CD8-positive, alpha-beta T cell (primary cell): ENCODE measurements at regions of chr2 and their contacts with region 1.

Region 1: DNA sequence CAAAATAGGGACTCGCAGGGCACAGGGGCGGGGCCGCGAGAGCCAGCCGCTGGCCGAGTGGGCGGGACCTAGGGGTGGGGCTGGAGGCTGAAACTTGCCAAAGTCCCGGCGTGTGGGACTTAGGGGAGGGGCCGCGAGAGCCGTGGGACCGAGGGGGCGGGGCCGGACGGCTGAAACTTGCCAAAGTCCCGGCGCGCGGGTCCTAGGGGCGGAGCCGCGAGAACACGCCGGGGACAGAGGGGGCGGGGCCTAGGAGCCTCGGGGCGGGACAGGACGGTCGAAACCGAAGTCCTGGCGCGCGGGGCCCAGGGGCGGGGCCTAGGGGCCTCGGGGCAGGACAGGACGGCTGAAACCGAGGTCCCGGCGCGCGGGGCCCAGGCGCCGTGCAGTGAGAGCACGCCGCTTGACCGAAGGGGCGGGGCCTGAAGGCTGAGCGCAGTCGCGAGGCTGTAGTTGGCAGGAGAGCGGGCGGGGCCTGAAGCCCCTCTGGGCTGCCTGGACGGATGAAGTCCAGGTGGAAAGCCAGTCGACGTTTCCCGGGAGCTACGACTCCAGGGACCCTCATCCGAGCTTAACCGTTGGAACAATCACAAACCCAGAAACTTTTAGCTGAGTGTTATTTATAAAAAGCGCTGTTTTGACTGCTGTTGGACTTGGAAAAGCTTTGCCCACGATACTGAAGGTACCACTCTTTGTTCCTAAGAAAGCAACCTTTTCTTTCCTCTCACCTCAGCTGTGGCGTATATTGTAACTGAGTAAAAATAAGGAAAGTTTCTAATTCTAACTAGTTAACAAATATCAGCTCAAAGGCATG is 475 bp upstream of the BARD1 start:
- DNase-seq: peak; percentile 90 to 98 (median 97)
- ATAC-seq: peak; percentile 79
- H3K4me3 ChIP-seq: peak overlapping the region; percentile 88 to 98
- H3K4me3 Mint-ChIP-seq: peak overlapping the region; percentile 99
- H3K27ac ChIP-seq: peak overlapping the region; percentile 50 to 78
- H3K27ac Mint-ChIP-seq: peak overlapping the region; percentile 72
- H3K4me1 ChIP-seq: peaks cover 17% of the 10 kb centered on the region
- H3K4me1 Mint-ChIP-seq: peaks cover 33% of the 10 kb centered on the region
- H3K27me3 ChIP-seq: no peaks in the 10 kb centered on the region
- H3K27me3 Mint-ChIP-seq: no peaks in the 10 kb centered on the region
- CTCF ChIP-seq: no peak

Region 2: GRCh38 chr2:213971536-213971935 is 838.4 kb before region 1 on chr2:
- CTCF ChIA-PET with region 1: no interaction called
- POLR2A ChIA-PET with region 1: no interaction called
- intact Hi-C with region 1: no loop called
- DNase-seq: no peak
- ATAC-seq: no peak
- H3K4me3 ChIP-seq: no peak overlapping the region
- H3K4me3 Mint-ChIP-seq: no peak overlapping the region
- H3K27ac ChIP-seq: no peak overlapping the region
- H3K27ac Mint-ChIP-seq: no peak overlapping the region
- H3K4me1 ChIP-seq: no peaks in the 10 kb centered on the region
- H3K4me1 Mint-ChIP-seq: no peaks in the 10 kb centered on the region
- H3K27me3 ChIP-seq: no peaks in the 10 kb centered on the region
- H3K27me3 Mint-ChIP-seq: peaks cover 2% of the 10 kb centered on the region
- CTCF ChIP-seq: no peak

Region 3: GRCh38 chr2:214679736-214680135 is 130.2 kb before region 1 on chr2:
- CTCF ChIA-PET with region 1: no interaction called
- POLR2A ChIA-PET with region 1: interaction called, 5 read pairs
- intact Hi-C with region 1: loop called in 1 of 2 experiments (anchors 5 kb)
- DNase-seq: no peak
- ATAC-seq: no peak
- H3K4me3 ChIP-seq: no peak overlapping the region
- H3K4me3 Mint-ChIP-seq: no peak overlapping the region
- H3K27ac ChIP-seq: no peak overlapping the region
- H3K27ac Mint-ChIP-seq: no peak overlapping the region
- H3K4me1 ChIP-seq: no peaks in the 10 kb centered on the region
- H3K4me1 Mint-ChIP-seq: peaks cover 7% of the 10 kb centered on the region
- H3K27me3 ChIP-seq: no peaks in the 10 kb centered on the region
- H3K27me3 Mint-ChIP-seq: no peaks in the 10 kb centered on the region
- CTCF ChIP-seq: no peak

Region 4: GRCh38 chr2:215052404-215052803 is 242.4 kb after region 1 on chr2:
- CTCF ChIA-PET with region 1: no interaction called
- POLR2A ChIA-PET with region 1: no interaction called
- intact Hi-C with region 1: no loop called
- DNase-seq: no peak
- ATAC-seq: no peak
- H3K4me3 ChIP-seq: no peak overlapping the region
- H3K4me3 Mint-ChIP-seq: no peak overlapping the region
- H3K27ac ChIP-seq: no peak overlapping the region
- H3K27ac Mint-ChIP-seq: no peak overlapping the region
- H3K4me1 ChIP-seq: no peaks in the 10 kb centered on the region
- H3K4me1 Mint-ChIP-seq: no peaks in the 10 kb centered on the region
- H3K27me3 ChIP-seq: no peaks in the 10 kb centered on the region
- H3K27me3 Mint-ChIP-seq: no peaks in the 10 kb centered on the region
- CTCF ChIP-seq: no peak

Region 5: DNA sequence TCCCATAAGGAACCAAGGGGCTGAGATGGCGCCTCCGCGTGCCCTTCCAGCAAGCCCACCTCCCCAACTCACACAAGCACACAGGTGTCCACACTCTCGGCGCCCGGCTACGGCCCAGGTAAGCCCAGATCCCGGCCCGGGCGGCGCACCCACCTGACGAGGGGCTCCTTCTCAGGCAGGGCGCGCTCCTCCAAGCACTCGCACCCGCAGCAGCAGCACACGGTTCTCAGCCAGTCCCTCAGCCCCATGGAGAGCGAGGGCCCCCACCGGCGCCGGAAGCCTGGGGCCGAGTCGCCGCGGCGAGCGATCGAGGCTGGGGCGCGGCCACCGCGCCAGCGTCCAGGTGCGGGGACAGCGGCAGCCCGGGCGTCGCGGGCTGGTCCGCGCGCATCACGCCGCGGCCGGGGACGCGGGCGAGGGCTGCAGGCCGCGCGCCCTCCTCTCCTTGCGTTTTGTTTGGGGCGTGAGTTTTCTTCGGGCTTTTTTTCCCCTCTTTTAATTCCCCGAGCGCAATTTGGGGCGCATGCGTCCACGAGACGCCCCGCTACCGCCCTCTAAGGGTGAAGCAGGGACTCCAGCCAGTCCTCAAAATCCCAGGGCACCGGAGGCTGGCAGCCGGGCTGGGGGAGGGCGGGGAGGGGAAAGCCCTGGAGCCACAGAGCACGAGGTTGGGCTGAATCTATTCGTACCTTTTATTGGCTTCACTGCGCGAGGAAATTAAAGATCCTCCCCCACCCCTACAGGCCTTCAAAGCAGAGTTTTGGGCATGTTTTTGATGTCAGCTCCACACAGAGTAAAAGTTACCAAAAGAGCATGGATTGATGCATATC is 1203.3 kb after region 1 on chr2 and contains the start of gene MREG:
- CTCF ChIA-PET with region 1: no interaction called
- POLR2A ChIA-PET with region 1: interaction called, 3 read pairs
- intact Hi-C with region 1: loop called in 1 of 2 experiments (anchors 10 kb)
- DNase-seq: peak; percentile 66 to 92 (median 83)
- ATAC-seq: peak; percentile 80
- H3K4me3 ChIP-seq: peak within 1 kb of the TSS; percentile 44 to 80
- H3K4me3 Mint-ChIP-seq: peak within 1 kb of the TSS; percentile 85
- H3K27ac ChIP-seq: peak within 1 kb of the TSS; percentile 1 to 3
- H3K27ac Mint-ChIP-seq: peak within 1 kb of the TSS; percentile 61
- H3K4me1 ChIP-seq: peaks cover 36% of the 10 kb centered on the region
- H3K4me1 Mint-ChIP-seq: peaks cover 65% of the 10 kb centered on the region
- H3K27me3 ChIP-seq: no peaks in the 10 kb centered on the region
- H3K27me3 Mint-ChIP-seq: no peaks in the 10 kb centered on the region
- CTCF ChIP-seq: peak; percentile 67
- total RNA-seq, gene MREG: 3.2 to 3.6 TPM